HEK293 (cell line): ENCODE measurements at regions of chr2 and their contacts with region 1.

Region 1: DNA sequence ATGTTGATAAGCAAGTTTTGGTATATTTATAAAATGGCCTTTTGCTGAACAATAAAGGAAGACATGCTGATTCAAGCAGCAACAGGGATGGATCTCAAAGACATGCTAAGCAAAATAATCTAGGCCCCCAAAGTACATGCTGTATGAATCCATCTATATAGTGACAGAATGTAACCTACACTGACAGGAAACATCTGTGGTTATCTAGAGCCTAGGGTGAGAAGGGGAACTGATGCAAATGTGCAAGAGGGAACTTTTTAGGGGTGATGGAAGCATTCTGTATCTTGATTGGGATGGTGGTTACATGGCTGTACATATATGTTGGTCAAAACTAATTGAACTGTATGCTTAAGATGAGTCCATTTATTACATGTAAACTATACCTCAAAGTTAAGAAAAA is 24.2 kb downstream of the CNRIP1 start:
- H3K4me3 ChIP-seq: no peak overlapping the region
- H3K27ac ChIP-seq: no peak overlapping the region
- H3K4me1 ChIP-seq: no peaks in the 10 kb centered on the region
- CTCF ChIP-seq: no peak

Region 2: DNA sequence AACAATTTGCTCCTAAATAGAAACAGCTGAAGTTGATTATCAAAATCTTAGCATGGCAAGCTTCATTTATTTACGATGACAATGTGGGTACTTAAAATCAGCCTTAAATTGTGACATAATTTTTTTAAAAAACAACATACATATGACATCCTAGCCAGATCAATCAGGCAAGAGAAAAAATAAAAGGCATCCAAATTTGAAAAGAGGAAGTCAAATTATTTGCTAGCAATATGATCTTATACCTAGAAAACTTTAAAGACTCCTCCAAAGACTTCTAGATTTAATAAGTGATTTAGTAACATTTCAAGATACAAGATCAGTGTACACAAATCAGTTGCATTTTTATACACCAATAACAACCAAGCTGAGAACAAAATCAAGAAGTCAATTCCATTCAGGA is 28.9 kb before region 1 on chr2:
- CTCF ChIA-PET with region 1: interaction called, 11 read pairs
- POLR2A ChIA-PET with region 1: no interaction called
- H3K4me3 ChIP-seq: no peak overlapping the region
- H3K27ac ChIP-seq: no peak overlapping the region
- H3K4me1 ChIP-seq: no peaks in the 10 kb centered on the region
- CTCF ChIP-seq: no peak

Region 3: DNA sequence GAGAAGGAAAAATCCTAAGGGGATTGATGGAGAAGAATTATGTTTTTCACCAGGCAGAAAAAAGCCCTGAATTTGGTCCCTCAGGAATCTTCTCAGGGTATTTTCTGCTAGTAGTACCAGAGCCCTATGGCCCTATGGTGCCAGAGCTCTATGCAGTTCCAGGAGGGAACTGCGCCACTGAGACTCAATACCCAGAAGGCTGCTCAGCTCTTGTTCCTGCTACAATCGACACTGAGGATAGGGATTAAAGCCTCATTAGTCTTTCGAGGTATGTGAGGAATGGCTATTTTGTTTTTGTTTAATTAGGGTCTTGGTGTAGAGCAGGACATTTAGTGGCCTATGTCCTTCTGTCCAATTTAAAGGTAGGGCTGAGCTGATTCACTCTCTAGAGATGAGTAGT is 21.5 kb before region 1 on chr2:
- CTCF ChIA-PET with region 1: interaction called, 13 read pairs
- POLR2A ChIA-PET with region 1: no interaction called
- H3K4me3 ChIP-seq: no peak overlapping the region
- H3K27ac ChIP-seq: no peak overlapping the region
- H3K4me1 ChIP-seq: 0 out of 2 replicates have a peak, but pooled peaks cover under 1% of the 10 kb centered on the region
- CTCF ChIP-seq: no peak

Region 4: GRCh38 chr2:68282811-68283418 is 12.6 kb before region 1 on chr2:
- CTCF ChIA-PET with region 1: interaction called, 30 read pairs
- POLR2A ChIA-PET with region 1: no interaction called
- H3K4me3 ChIP-seq: no peak overlapping the region
- H3K27ac ChIP-seq: no peak overlapping the region
- H3K4me1 ChIP-seq: peaks cover 7% of the 10 kb centered on the region
- CTCF ChIP-seq: no peak

Region 5: GRCh38 chr2:68319398-68320117 is 24.0 kb after region 1 on chr2 and contains the start of gene CNRIP1:
- CTCF ChIA-PET with region 1: interaction called, 10 read pairs
- POLR2A ChIA-PET with region 1: no interaction called
- H3K4me3 ChIP-seq: peak within 1 kb of the TSS; percentile 65
- H3K27ac ChIP-seq: peak within 1 kb of the TSS; percentile 49; the same call in 1 of the 2 replicates
- H3K4me1 ChIP-seq: no peaks in the 10 kb centered on the region
- CTCF ChIP-seq: peak; percentile 76; the same call in 1 of the 2 replicates

Region 6: GRCh38 chr2:68548396-68548795 is 252.9 kb after region 1 on chr2:
- CTCF ChIA-PET with region 1: no interaction called
- POLR2A ChIA-PET with region 1: no interaction called
- H3K4me3 ChIP-seq: no peak overlapping the region
- H3K27ac ChIP-seq: no peak overlapping the region
- H3K4me1 ChIP-seq: no peaks in the 10 kb centered on the region
- CTCF ChIP-seq: no peak